HepG2 (cell line): ENCODE measurements at regions of chr11 and their contacts with region 1.

Region 1: GRCh38 chr11:35391922-35392813 is 27.2 kb downstream of the SLC1A2 start:
- DNase-seq: peak; percentile 60
- ATAC-seq: peak; percentile 88
- H3K4me3 ChIP-seq: peak overlapping the region in 2 of 3 experiments; percentile 32 to 34; a peak in 3 of 6 replicates
- H3K27ac ChIP-seq: no peak overlapping the region
- H3K4me1 ChIP-seq: peaks cover 30% of the 10 kb centered on the region
- H3K27me3 ChIP-seq: 0 out of 5 replicates have a peak, but pooled peaks cover 2 to 6% of the 10 kb centered on the region in 2 experiments
- CTCF ChIP-seq: peak; percentile 95
- EP300 ChIP-seq: no peak
- POLR2A ChIP-seq: no peak
- RAD21 ChIP-seq: peak; percentile 91

Region 2: GRCh38 chr11:34492806-34493414 is 899.3 kb before region 1 on chr11:
- CTCF ChIA-PET with region 1: no interaction called
- POLR2A ChIA-PET with region 1: no interaction called
- in situ Hi-C with region 1: no loop called
- intact Hi-C with region 1: loop called (anchors 5 kb)
- DNase-seq: peak; percentile 68
- ATAC-seq: peak; percentile 49
- H3K4me3 ChIP-seq: no peak overlapping the region
- H3K27ac ChIP-seq: no peak overlapping the region
- H3K4me1 ChIP-seq: peaks cover 43% of the 10 kb centered on the region
- H3K27me3 ChIP-seq: no peaks in the 10 kb centered on the region
- CTCF ChIP-seq: peak; percentile 80
- EP300 ChIP-seq: no peak
- POLR2A ChIP-seq: no peak
- RAD21 ChIP-seq: peak; percentile 58; the same call in 1 of the 2 replicates

Region 3: DNA sequence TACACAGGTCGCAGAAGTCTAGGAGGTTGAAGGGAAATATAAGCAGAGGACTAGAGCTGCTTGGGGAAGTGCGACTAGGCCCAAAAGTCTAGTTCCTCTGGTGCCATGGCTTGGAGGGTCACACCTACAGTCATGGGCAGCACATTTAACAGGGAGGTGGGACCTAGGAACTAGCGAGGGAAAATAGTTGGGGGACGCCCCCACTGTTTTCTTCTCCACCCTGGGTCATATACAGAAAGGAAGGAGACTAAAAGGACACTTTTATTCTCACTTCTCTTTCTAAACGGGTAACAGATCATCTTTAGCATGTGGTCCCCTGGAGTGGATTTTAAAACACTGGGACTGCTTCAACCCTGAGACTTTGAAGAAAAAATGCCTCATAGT is 492.5 kb before region 1 on chr11:
- CTCF ChIA-PET with region 1: interaction called, 5 read pairs
- POLR2A ChIA-PET with region 1: no interaction called
- in situ Hi-C with region 1: no loop called
- intact Hi-C with region 1: loop called (anchors 1 kb)
- DNase-seq: no peak
- ATAC-seq: no peak
- H3K4me3 ChIP-seq: no peak overlapping the region
- H3K27ac ChIP-seq: no peak overlapping the region
- H3K4me1 ChIP-seq: peaks cover 9% of the 10 kb centered on the region
- H3K27me3 ChIP-seq: no peaks in the 10 kb centered on the region
- CTCF ChIP-seq: no peak
- EP300 ChIP-seq: no peak
- POLR2A ChIP-seq: no peak
- RAD21 ChIP-seq: no peak

Region 4: GRCh38 chr11:34926101-34926830 is 465.9 kb before region 1 on chr11:
- CTCF ChIA-PET with region 1: interaction called, 18 read pairs
- POLR2A ChIA-PET with region 1: interaction called, 9 read pairs
- in situ Hi-C with region 1: loop called (anchors 10 kb)
- intact Hi-C with region 1: loop called (anchors 1 kb)
- DNase-seq: peak; percentile 47
- ATAC-seq: no peak
- H3K4me3 ChIP-seq: no peak overlapping the region
- H3K27ac ChIP-seq: no peak overlapping the region
- H3K4me1 ChIP-seq: peaks cover 95% of the 10 kb centered on the region
- H3K27me3 ChIP-seq: no peaks in the 10 kb centered on the region
- CTCF ChIP-seq: peak; percentile 69
- EP300 ChIP-seq: no peak
- POLR2A ChIP-seq: no peak
- RAD21 ChIP-seq: peak; percentile 57; the same call in 1 of the 2 replicates

Region 5: GRCh38 chr11:34997952-34998528 is 394.1 kb before region 1 on chr11:
- CTCF ChIA-PET with region 1: no interaction called
- POLR2A ChIA-PET with region 1: no interaction called
- in situ Hi-C with region 1: no loop called
- intact Hi-C with region 1: loop called (anchors 2 kb)
- DNase-seq: no peak
- ATAC-seq: no peak
- H3K4me3 ChIP-seq: no peak overlapping the region
- H3K27ac ChIP-seq: no peak overlapping the region
- H3K4me1 ChIP-seq: no peaks in the 10 kb centered on the region
- H3K27me3 ChIP-seq: no peaks in the 10 kb centered on the region
- CTCF ChIP-seq: peak; percentile 18; the same call in 1 of the 2 replicates
- EP300 ChIP-seq: no peak
- POLR2A ChIP-seq: no peak
- RAD21 ChIP-seq: no peak

Region 6: DNA sequence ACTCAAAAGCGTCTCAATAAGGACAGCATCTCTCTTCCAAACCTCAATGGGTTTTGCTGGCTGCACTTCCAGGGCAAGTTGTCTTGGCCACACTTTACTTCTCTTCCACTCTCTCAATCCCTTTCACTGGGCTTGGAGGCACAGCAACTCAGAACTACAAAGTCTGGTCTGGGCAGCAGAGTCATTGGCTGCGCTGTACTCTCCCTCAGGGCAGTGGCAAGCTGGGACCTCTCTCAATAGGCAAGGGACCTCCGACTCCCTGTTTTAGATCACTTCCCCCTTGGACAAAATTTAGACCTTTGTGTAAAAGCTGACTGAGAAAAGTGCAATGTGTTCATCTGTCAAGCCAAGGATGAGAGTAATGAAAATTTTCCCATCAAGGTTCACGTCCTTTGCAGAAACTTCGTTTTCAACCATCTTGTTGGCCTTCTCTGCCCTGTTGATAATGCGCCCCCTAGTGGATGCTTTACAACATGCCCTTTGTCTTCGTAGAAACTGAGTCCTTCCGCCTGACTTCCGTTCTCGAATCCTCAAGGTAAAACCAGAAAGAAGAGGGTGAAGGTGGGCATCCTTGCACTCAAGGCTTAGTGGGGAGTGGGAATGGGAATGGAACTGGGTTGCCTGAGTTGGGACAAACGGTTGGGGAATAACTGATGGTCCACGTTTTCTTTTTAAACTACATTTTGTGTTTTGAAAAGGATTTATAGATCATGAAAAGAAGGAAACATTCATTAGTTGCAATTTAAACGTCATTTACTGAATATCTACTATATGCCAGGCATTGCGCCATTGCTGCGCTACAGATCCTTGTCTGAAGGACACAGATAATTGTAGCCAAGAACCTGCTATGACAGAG is 154.1 kb before region 1 on chr11:
- CTCF ChIA-PET with region 1: interaction called, 4 read pairs
- POLR2A ChIA-PET with region 1: no interaction called
- in situ Hi-C with region 1: no loop called
- intact Hi-C with region 1: loop called (anchors 2 kb)
- DNase-seq: peak; percentile 47
- ATAC-seq: peak; percentile 59
- H3K4me3 ChIP-seq: no peak overlapping the region
- H3K27ac ChIP-seq: no peak overlapping the region
- H3K4me1 ChIP-seq: peaks cover 12% of the 10 kb centered on the region; the same call in 1 of the 2 replicates
- H3K27me3 ChIP-seq: no peaks in the 10 kb centered on the region
- CTCF ChIP-seq: peak; percentile 82
- EP300 ChIP-seq: no peak
- POLR2A ChIP-seq: no peak
- RAD21 ChIP-seq: peak; percentile 50

Region 7: GRCh38 chr11:35272391-35272902 is 119.7 kb before region 1 on chr11:
- CTCF ChIA-PET with region 1: no interaction called
- POLR2A ChIA-PET with region 1: no interaction called
- in situ Hi-C with region 1: no loop called
- intact Hi-C with region 1: no loop called
- DNase-seq: no peak
- ATAC-seq: no peak
- H3K4me3 ChIP-seq: no peak overlapping the region
- H3K27ac ChIP-seq: no peak overlapping the region
- H3K4me1 ChIP-seq: no peaks in the 10 kb centered on the region
- H3K27me3 ChIP-seq: no peaks in the 10 kb centered on the region
- CTCF ChIP-seq: no peak
- EP300 ChIP-seq: no peak
- POLR2A ChIP-seq: no peak
- RAD21 ChIP-seq: no peak

Region 8: GRCh38 chr11:35359321-35360054 is 32.7 kb before region 1 on chr11:
- CTCF ChIA-PET with region 1: no interaction called
- POLR2A ChIA-PET with region 1: interaction called, 5 read pairs
- in situ Hi-C with region 1: no loop called
- intact Hi-C with region 1: loop called (anchors 1 kb)
- DNase-seq: peak; percentile 76
- ATAC-seq: peak; percentile 41
- H3K4me3 ChIP-seq: peak overlapping the region; percentile 59 to 66 (median 64)
- H3K27ac ChIP-seq: peak overlapping the region; percentile 96
- H3K4me1 ChIP-seq: peaks cover 86% of the 10 kb centered on the region
- H3K27me3 ChIP-seq: no peaks in the 10 kb centered on the region
- CTCF ChIP-seq: no peak
- EP300 ChIP-seq: peak in 1 of 2 experiments; percentile 86; a peak in 2 of 4 replicates
- POLR2A ChIP-seq: no peak; a peak in 1 of 4 replicates
- RAD21 ChIP-seq: no peak

Region 9: GRCh38 chr11:35454362-35454761 is 62.2 kb after region 1 on chr11:
- CTCF ChIA-PET with region 1: no interaction called
- POLR2A ChIA-PET with region 1: no interaction called
- in situ Hi-C with region 1: no loop called
- intact Hi-C with region 1: no loop called
- DNase-seq: no peak
- ATAC-seq: no peak
- H3K4me3 ChIP-seq: no peak overlapping the region
- H3K27ac ChIP-seq: no peak overlapping the region
- H3K4me1 ChIP-seq: no peaks in the 10 kb centered on the region
- H3K27me3 ChIP-seq: no peaks in the 10 kb centered on the region
- CTCF ChIP-seq: no peak
- EP300 ChIP-seq: no peak
- POLR2A ChIP-seq: no peak
- RAD21 ChIP-seq: no peak